ENCODE measurements at regions of chr1 and their contacts with region 1.

Region 1: GRCh38 chr1:113835642-113836307 is 23.5 kb upstream of the RSBN1 start:
- DNase-seq: peak; percentile 8
- H3K4me3 Mint-ChIP-seq: no peak overlapping the region
- H3K27ac Mint-ChIP-seq: no peak overlapping the region
- H3K4me1 Mint-ChIP-seq: no peaks in the 10 kb centered on the region
- H3K27me3 Mint-ChIP-seq: no peaks in the 10 kb centered on the region
- CTCF ChIP-seq: no peak

Region 2: GRCh38 chr1:113887402-113888175 is 51.8 kb after region 1 on chr1 and contains the start of gene BCL2L15:
- CTCF ChIA-PET with region 1: no interaction called
- intact Hi-C with region 1: loop called (anchors 5 kb)
- DNase-seq: peak; percentile 14
- H3K4me3 Mint-ChIP-seq: peak within 1 kb of the TSS; percentile 77
- H3K27ac Mint-ChIP-seq: peak within 1 kb of the TSS; percentile 87
- H3K4me1 Mint-ChIP-seq: peaks cover 20% of the 10 kb centered on the region
- H3K27me3 Mint-ChIP-seq: no peaks in the 10 kb centered on the region
- CTCF ChIP-seq: no peak
- total RNA-seq, gene BCL2L15: 13.0 and 16.8 TPM in 2 replicates

Region 3: GRCh38 chr1:113904674-113905434 is 69.1 kb after region 1 on chr1 and contains the starts of genes AP4B1 and DCLRE1B:
- CTCF ChIA-PET with region 1: no interaction called
- intact Hi-C with region 1: loop called (anchors 1 kb)
- DNase-seq: peak; percentile 96
- H3K4me3 Mint-ChIP-seq: peak within 1 kb of the TSS; percentile 86
- H3K27ac Mint-ChIP-seq: peak within 1 kb of the TSS; percentile 85
- H3K4me1 Mint-ChIP-seq: no peaks in the 10 kb centered on the region
- H3K27me3 Mint-ChIP-seq: no peaks in the 10 kb centered on the region
- CTCF ChIP-seq: peak; percentile 58
- total RNA-seq, gene AP4B1: 18.3 and 21.0 TPM in 2 replicates
- total RNA-seq, gene DCLRE1B: 6.9 and 7.5 TPM in 2 replicates

Region 4: GRCh38 chr1:113940365-113941244 is 104.8 kb after region 1 on chr1:
- CTCF ChIA-PET with region 1: no interaction called
- intact Hi-C with region 1: no loop called
- DNase-seq: no peak
- H3K4me3 Mint-ChIP-seq: no peak overlapping the region
- H3K27ac Mint-ChIP-seq: no peak overlapping the region
- H3K4me1 Mint-ChIP-seq: peaks cover 10% of the 10 kb centered on the region
- H3K27me3 Mint-ChIP-seq: no peaks in the 10 kb centered on the region
- CTCF ChIP-seq: no peak

Region 5: DNA sequence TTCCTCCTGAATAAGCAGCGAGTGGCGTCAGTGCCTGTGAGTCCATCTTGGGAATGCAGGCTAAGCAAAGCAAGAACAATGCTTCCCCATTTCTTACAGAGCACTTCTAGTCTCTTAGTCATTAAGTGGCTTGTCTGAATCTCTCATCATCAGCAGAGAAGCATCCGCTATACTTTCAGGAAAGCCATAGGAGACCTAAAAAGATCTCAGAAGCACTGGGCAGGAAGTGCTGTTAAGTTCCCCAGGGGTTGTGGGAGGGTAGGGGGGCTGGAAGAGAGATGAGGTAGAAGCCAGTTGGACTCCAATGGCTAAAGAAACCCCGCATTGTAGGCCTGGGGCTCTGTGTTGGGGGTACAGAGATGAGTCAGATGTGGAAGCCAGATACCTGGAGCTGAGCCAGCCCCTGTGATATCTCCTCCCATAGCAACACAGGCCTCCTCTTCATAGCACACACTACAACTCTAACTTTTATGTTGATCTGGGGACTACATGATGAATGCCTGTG is 273.0 kb after region 1 on chr1:
- CTCF ChIA-PET with region 1: no interaction called
- intact Hi-C with region 1: no loop called
- DNase-seq: no peak
- H3K4me3 Mint-ChIP-seq: no peak overlapping the region
- H3K27ac Mint-ChIP-seq: no peak overlapping the region
- H3K4me1 Mint-ChIP-seq: peaks cover 2% of the 10 kb centered on the region
- H3K27me3 Mint-ChIP-seq: peaks cover 99% of the 10 kb centered on the region
- CTCF ChIP-seq: no peak

Region 6: DNA sequence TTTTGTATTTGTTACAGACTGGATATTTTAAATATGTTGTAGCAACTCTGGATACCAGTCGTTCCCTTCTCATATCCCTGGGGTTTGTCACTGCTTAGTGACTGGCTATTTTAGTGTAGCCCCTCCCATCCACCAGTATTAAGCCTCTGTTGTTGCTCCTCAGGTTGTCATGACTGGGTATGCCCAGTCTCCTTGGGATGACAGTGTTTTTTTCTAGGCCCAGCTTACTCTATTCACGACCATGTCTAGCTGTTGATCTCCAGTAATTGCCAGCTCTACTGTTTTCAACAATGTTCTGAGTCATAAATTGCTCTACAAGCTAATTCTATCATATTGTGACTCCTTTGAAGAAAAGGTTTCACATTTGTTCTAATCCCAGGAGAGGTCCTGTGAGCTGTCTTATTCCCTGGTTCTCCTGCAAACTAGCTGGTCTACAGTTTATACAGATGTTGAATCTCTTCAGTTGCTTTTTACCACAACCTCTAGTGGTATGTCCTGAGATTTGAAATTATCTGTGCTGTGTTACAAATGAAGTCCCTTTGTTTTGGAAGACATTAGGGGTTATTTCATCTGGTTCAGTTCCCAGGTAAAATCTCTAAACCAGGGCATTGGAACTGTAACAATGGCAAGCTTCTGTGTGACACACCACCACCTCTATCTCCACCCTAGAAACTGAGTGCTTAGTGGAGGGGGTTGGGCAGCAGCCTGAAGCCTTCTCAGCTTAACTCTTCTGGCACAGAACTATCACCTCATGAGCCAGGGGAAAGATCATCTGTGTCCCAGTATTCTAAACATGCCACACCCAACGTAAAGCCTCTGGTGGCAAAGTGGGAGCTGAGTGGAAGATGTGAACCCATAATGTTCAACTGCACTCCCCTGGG is 550.6 kb after region 1 on chr1:
- CTCF ChIA-PET with region 1: no interaction called
- intact Hi-C with region 1: no loop called
- DNase-seq: no peak
- H3K4me3 Mint-ChIP-seq: no peak overlapping the region
- H3K27ac Mint-ChIP-seq: peak overlapping the region; percentile 35
- H3K4me1 Mint-ChIP-seq: no peaks in the 10 kb centered on the region
- H3K27me3 Mint-ChIP-seq: no peaks in the 10 kb centered on the region
- CTCF ChIP-seq: no peak

Measured in Calu3 (cell line).